ENCODE measurements at regions of chr14 and their contacts with region 1.

Region 1: GRCh38 chr14:65170768-65171507 is 68.6 kb upstream of the MAX start:
- DNase-seq: peak; percentile 39 to 73 (median 43)
- H3K4me3 ChIP-seq: peak overlapping the region; percentile 39 to 45
- H3K4me3 Mint-ChIP-seq: peak overlapping the region; percentile 79 to 88 (median 83)
- H3K27ac ChIP-seq: no peak overlapping the region
- H3K27ac Mint-ChIP-seq: peak overlapping the region in 6 of 7 donors; percentile 8 to 87 (median 66)
- H3K4me1 ChIP-seq: peaks cover 8% of the 10 kb centered on the region
- H3K4me1 Mint-ChIP-seq: peaks cover 11 to 18% (median 13%) of the 10 kb centered on the region in 4 donors
- H3K27me3 ChIP-seq: no peaks in the 10 kb centered on the region
- H3K27me3 Mint-ChIP-seq: peaks cover 0 to 2% of the 10 kb centered on the region in 2 donors

Region 2: GRCh38 chr14:64349741-64350490 is 821.0 kb before region 1 on chr14:
- CTCF ChIA-PET with region 1: no interaction called
- POLR2A ChIA-PET with region 1: no interaction called
- intact Hi-C with region 1: no loop called
- DNase-seq: no peak
- H3K4me3 ChIP-seq: no peak overlapping the region
- H3K4me3 Mint-ChIP-seq: no peak overlapping the region
- H3K27ac ChIP-seq: no peak overlapping the region
- H3K27ac Mint-ChIP-seq: peak overlapping the region in 1 of 7 donors; percentile 1
- H3K4me1 ChIP-seq: no peaks in the 10 kb centered on the region
- H3K4me1 Mint-ChIP-seq: no peaks in the 10 kb centered on the region
- H3K27me3 ChIP-seq: no peaks in the 10 kb centered on the region
- H3K27me3 Mint-ChIP-seq: no peaks in the 10 kb centered on the region

Region 3: GRCh38 chr14:65222440-65222858 is 51.5 kb after region 1 on chr14:
- CTCF ChIA-PET with region 1: interaction called, 3 read pairs
- POLR2A ChIA-PET with region 1: no interaction called
- intact Hi-C with region 1: loop called (anchors 2 kb)
- DNase-seq: peak; percentile 45 to 55 (median 48)
- H3K4me3 ChIP-seq: no peak overlapping the region
- H3K4me3 Mint-ChIP-seq: peak overlapping the region in 1 of 8 donors; percentile 64
- H3K27ac ChIP-seq: no peak overlapping the region
- H3K27ac Mint-ChIP-seq: peak overlapping the region; percentile 0 to 83 (median 42)
- H3K4me1 ChIP-seq: peaks cover 34% of the 10 kb centered on the region
- H3K4me1 Mint-ChIP-seq: peaks cover 23 to 59% (median 38%) of the 10 kb centered on the region in 4 donors
- H3K27me3 ChIP-seq: no peaks in the 10 kb centered on the region
- H3K27me3 Mint-ChIP-seq: no peaks in the 10 kb centered on the region